ENCODE measurements at regions of chr12 and their contacts with region 1.

Region 1: DNA sequence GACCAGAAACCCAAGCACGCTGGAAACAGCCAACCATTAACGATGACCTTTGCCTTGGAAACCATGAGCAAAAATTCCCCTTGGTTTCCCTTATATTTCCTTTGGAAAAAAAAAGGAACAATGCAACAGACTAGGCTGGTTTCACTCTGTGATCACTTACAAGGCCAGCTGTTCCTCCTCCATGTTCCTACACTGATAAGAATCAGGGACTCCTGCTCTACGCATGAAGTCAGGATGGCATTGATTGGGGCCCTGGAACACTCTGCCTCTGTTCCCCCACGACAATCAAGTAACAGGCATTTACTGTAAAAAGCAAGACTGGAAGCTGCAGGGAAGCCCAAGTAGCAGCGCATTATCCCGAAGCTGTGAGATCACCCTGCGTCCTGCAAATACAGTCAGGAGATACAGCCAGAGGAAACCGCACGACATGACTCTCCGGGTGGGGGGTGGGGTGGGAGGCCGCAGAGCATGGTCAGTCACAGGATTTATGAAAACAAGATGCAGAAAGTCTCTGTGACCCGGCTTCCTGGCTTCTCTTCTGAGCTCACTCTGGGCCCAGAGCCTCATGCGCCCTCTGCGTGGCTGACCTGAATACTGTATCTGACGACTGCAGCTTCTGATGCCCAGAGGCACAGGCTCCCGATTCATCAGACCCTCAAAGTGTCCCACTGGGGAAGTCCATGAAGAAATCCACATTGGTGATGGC is 31.1 kb downstream of the SSH1 start:
- DNase-seq: no peak
- H3K4me3 ChIP-seq: no peak overlapping the region
- H3K27ac ChIP-seq: peak overlapping the region; percentile 27; the same call in 1 of the 2 replicates
- H3K4me1 ChIP-seq: peaks cover 0 to 7% (median 5%) of the 10 kb centered on the region in 4 experiments; a peak in 4 of 7 replicates
- H3K27me3 ChIP-seq: no peaks in the 10 kb centered on the region
- CTCF ChIP-seq: no peak
- EP300 ChIP-seq: no peak
- POLR2A ChIP-seq: no peak
- RAD21 ChIP-seq: no peak

Region 2: GRCh38 chr12:108849653-108850052 is 23.4 kb after region 1 on chr12:
- CTCF ChIA-PET with region 1: interaction called, 16 read pairs
- POLR2A ChIA-PET with region 1: interaction called, 3 read pairs
- DNase-seq: no peak
- H3K4me3 ChIP-seq: no peak overlapping the region
- H3K27ac ChIP-seq: no peak overlapping the region
- H3K4me1 ChIP-seq: no peaks in the 10 kb centered on the region
- H3K27me3 ChIP-seq: no peaks in the 10 kb centered on the region
- CTCF ChIP-seq: no peak
- EP300 ChIP-seq: no peak
- POLR2A ChIP-seq: no peak
- RAD21 ChIP-seq: no peak

Measured in H1 (cell line).